Dorsolateral prefrontal cortex (tissue), 120 donors: ENCODE measurements at regions of chr10 and their contacts with region 1.

Region 1: DNA sequence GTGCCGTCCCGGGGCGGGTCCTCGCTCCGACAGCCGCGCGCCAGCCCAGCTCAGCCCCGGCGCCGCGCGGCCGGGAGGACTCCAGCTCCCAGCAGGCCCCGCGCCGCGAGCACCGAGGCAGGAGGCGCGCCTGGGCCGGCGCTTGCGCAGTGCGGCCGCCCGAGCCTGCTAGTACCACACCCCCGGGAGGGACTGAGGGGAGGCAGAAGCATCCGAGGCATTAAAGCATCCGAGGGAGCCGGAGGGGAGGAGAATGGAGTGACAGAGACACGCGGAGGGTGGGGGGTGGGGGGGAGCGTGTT is at the start of gene GRK5:
- DNase-seq: peak; percentile 84 to 96 (median 92)
- H3K4me3 ChIP-seq: peak within 1 kb of the TSS; percentile 57 to 94 (median 84)
- H3K27ac ChIP-seq: peak within 1 kb of the TSS; percentile 55 to 99 (median 95)
- H3K27me3 ChIP-seq: no peaks in the 10 kb centered on the region
- CTCF ChIP-seq: peak in 3 of 56 donors; percentile 8 to 32 (median 12)
- total RNA-seq, gene GRK5: 5.5 to 27.8 (median 14.1) TPM

Region 2: GRCh38 chr10:119165171-119166110 is 41.9 kb before region 1 on chr10 and contains the start of gene SFXN4:
- intact Hi-C with region 1: loop called (anchors 2 to 5 kb)
- DNase-seq: peak; percentile 75 to 91 (median 81)
- H3K4me3 ChIP-seq: peak within 1 kb of the TSS; percentile 61 to 98 (median 87)
- H3K27ac ChIP-seq: peak within 1 kb of the TSS; percentile 21 to 98 (median 90)
- H3K27me3 ChIP-seq: no peaks in the 10 kb centered on the region
- CTCF ChIP-seq: peak in 36 of 56 donors; percentile 7 to 62 (median 31)
- total RNA-seq, gene SFXN4: 22.4 to 49.6 (median 31.7) TPM

Region 3: DNA sequence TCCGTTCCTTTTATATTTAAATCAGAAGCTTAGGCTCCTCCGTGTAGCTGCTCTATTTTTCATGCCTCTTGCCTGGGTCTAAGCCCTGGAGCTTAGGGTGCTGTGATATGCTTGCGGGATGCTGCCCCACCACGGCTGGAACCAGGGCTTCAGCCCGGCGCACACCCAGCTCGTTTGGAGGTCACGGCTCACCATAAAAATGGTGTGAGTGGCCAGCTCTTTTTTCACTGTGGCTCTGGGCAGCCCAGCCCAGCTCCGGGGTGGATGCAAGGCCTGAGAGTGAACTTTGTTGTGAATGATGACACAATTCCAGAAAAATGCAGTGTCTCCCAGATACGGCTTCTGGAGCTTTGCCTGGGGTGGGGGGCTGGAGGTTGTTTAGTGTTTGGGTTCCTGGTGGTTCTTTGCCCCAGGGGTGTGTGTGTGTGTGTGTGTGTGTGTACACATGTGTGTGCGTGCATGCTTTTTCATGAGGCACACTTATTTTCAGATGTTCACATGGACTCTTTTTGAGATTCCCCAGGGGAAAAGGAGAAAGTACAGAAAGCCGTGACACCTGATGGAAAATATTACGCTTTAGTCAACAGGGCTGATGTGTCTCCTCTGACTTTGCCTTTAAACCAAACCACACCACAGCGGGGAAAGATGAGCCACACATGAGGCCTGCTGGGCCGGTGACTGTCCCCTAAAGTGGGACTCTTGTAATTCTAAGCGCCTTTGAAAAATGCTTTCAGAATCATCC is 46.3 kb after region 1 on chr10:
- intact Hi-C with region 1: no loop called
- DNase-seq: no peak
- H3K4me3 ChIP-seq: no peak overlapping the region
- H3K27ac ChIP-seq: peak overlapping the region in 33 of 59 donors; percentile 6 to 81 (median 50)
- H3K27me3 ChIP-seq: no peaks in the 10 kb centered on the region
- CTCF ChIP-seq: no peak

Region 4: GRCh38 chr10:119416855-119417254 is 209.5 kb after region 1 on chr10:
- intact Hi-C with region 1: loop called (anchors 2 to 10 kb)
- DNase-seq: peak in 9 of 10 donors; percentile 16 to 75 (median 58)
- H3K4me3 ChIP-seq: no peak overlapping the region
- H3K27ac ChIP-seq: no peak overlapping the region
- H3K27me3 ChIP-seq: no peaks in the 10 kb centered on the region
- CTCF ChIP-seq: peak in 55 of 56 donors; percentile 24 to 74 (median 61)

Region 5: GRCh38 chr10:119596537-119597404 is 389.5 kb after region 1 on chr10 and contains the start of gene TIAL1:
- intact Hi-C with region 1: loop called (anchors 5 kb)
- DNase-seq: peak; percentile 97 to 99 (median 99)
- H3K4me3 ChIP-seq: peak within 1 kb of the TSS; percentile 64 to 100 (median 91)
- H3K27ac ChIP-seq: peak within 1 kb of the TSS; percentile 93 to 100 (median 99)
- H3K27me3 ChIP-seq: no peaks in the 10 kb centered on the region
- CTCF ChIP-seq: peak in 34 of 56 donors; percentile 8 to 52 (median 26)
- total RNA-seq, gene TIAL1: 76.2 to 149 (median 107) TPM